ENCODE measurements at regions of chr2 and their contacts with region 1.

Region 1: GRCh38 chr2:65432227-65433190 is at the start of gene SPRED2:
- DNase-seq: peak; percentile 62 to 89 (median 87)
- H3K4me3 ChIP-seq: peak within 1 kb of the TSS; percentile 62 to 98 (median 87)
- H3K27ac ChIP-seq: peak within 1 kb of the TSS; percentile 10 to 95 (median 89)
- H3K27me3 ChIP-seq: no peaks in the 10 kb centered on the region
- CTCF ChIP-seq: peak in 42 of 56 donors; percentile 5 to 46 (median 26)
- total RNA-seq, gene SPRED2: 28.2 to 82.4 (median 50.7) TPM

Region 2: GRCh38 chr2:65129826-65130663 is 302.5 kb before region 1 on chr2 and contains the start of gene RAB1A:
- intact Hi-C with region 1: loop called in 1 of 2 experiments (anchors 2 kb)
- DNase-seq: peak; percentile 98 to 100 (median 99)
- H3K4me3 ChIP-seq: peak within 1 kb of the TSS; percentile 60 to 98 (median 86)
- H3K27ac ChIP-seq: peak within 1 kb of the TSS; percentile 81 to 98 (median 93)
- H3K27me3 ChIP-seq: no peaks in the 10 kb centered on the region
- CTCF ChIP-seq: peak in 53 of 56 donors; percentile 4 to 79 (median 60)
- total RNA-seq, gene RAB1A: 87.4 to 171 (median 127) TPM

Region 3: DNA sequence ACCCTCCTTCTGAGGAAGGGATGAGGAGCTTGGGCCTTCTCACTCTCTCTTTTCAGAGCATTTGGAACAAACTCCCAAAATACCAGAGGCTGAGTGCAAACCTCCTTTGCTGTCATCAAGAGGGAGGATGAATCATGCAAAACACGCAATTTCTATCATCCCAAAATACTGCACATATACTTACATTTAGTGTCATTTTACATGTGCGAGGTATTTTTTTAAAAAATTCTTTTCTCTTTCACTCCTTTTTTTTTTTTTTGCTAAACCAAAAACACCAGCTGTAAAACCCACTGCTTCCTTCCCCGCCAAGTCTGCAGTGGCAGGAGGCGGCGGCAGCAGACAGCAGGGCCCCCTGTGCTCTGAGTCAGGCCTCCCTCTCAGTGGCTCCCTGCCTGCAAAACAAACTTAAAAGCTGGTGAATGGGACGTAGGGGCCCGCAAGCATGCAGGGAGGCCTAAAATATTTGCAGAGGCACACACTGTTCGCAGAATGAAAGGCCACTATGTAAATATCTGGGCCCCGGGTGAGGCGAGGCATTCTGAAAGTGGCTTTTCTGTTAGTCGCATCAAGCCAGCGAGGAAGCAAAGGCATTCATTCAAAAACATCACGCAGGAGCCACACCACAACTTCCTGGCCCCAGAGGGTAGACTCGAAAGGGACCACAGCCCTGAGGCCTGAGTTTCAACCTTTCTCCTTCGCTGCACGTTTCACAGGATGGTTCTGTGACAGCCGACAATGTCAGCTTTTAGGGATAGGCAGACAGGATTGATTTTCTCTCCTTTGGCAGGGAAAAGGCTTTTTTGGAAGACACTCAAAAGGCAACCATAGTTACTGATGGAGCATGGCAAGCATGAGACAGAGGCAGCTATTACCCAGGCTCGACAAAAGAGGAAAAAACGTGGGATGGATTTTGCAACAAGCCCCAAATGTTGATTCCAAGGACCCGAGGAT is 131.5 kb before region 1 on chr2:
- intact Hi-C with region 1: loop called (anchors 1 to 2 kb)
- DNase-seq: peak; percentile 25 to 85 (median 71)
- H3K4me3 ChIP-seq: peak overlapping the region in 50 of 59 donors; percentile 2 to 55 (median 28)
- H3K27ac ChIP-seq: peak overlapping the region in 58 of 59 donors; percentile 51 to 94 (median 80)
- H3K27me3 ChIP-seq: no peaks in the 10 kb centered on the region
- CTCF ChIP-seq: peak in 3 of 56 donors; percentile 5 to 12 (median 6)

Region 4: DNA sequence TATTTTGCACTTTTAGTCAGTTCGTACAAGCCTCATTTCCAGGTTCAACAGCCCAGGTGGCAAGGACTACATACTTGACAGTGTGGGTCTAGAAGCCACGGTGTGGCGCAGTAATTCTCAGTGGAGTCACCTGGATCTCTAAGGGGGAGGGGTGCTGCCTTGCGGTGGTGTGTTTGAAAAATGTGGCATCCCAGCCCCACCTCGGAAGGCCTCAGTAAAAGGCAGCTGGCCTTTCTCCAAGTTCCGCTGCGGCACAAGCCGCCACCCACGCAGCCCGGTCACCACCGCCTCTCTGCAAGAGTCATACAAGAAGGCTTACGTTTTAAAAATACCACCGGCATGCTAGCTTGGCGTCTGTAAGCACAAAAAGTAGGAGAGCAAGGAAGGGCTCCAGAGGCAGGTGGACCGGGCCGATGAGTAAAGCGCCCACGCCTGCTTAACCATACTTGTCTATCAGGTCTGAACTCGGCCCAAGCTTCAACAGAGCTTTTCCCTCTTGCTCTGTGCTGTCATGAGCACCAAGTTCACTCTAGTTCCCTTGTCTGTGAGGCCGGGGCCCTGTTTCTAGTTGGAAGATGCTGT is 49.6 kb before region 1 on chr2:
- intact Hi-C with region 1: loop called in 1 of 2 experiments (anchors 5 kb)
- DNase-seq: peak in 9 of 10 donors; percentile 39 to 81 (median 70)
- H3K4me3 ChIP-seq: peak overlapping the region in 37 of 59 donors; percentile 2 to 39 (median 16)
- H3K27ac ChIP-seq: peak overlapping the region in 51 of 59 donors; percentile 3 to 81 (median 63)
- H3K27me3 ChIP-seq: no peaks in the 10 kb centered on the region
- CTCF ChIP-seq: peak in 7 of 56 donors; percentile 2 to 30 (median 16)

Region 5: DNA sequence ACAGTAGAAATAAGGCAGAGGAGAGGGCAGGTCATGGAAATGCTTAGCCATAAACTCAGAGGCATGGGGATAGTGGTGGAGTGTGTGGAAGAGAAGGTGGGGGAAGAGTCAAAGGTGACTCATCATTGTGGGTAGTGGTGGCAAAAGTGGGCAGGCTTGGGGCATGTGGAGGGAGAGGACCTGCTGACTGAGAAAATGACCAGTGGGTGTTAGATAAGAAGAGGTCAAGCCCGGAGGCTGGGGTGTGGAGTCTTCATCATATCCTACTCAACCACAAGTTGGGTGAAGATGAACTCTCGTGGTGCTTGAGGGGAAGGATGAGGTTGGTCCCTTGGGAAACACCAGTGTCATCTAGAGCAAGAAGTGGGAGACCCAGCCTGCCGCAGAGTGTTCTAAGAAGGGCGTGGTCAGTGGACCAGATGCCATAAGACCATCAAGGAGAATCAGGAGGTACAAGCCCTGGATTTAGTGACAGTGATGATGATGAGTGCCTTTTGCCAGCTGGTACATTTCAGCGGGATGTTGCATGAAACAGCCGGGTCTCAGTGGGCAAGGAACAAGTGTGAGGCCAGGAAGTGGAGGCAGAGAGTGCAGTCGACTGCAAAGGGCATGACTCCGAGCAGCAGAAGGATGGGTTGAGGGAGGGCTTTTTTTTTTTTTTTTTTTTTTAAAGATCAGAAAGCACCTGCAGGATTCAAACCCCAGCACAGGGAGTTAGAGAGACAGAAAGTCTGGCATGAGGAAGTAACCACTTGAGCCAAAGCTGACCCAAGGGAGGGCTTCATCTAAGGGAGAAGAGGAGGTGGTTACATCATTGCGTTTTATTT is 122.5 kb after region 1 on chr2:
- intact Hi-C with region 1: loop called in 1 of 2 experiments (anchors 5 kb)
- DNase-seq: no peak
- H3K4me3 ChIP-seq: no peak overlapping the region
- H3K27ac ChIP-seq: no peak overlapping the region
- H3K27me3 ChIP-seq: no peaks in the 10 kb centered on the region
- CTCF ChIP-seq: no peak

Region 6: DNA sequence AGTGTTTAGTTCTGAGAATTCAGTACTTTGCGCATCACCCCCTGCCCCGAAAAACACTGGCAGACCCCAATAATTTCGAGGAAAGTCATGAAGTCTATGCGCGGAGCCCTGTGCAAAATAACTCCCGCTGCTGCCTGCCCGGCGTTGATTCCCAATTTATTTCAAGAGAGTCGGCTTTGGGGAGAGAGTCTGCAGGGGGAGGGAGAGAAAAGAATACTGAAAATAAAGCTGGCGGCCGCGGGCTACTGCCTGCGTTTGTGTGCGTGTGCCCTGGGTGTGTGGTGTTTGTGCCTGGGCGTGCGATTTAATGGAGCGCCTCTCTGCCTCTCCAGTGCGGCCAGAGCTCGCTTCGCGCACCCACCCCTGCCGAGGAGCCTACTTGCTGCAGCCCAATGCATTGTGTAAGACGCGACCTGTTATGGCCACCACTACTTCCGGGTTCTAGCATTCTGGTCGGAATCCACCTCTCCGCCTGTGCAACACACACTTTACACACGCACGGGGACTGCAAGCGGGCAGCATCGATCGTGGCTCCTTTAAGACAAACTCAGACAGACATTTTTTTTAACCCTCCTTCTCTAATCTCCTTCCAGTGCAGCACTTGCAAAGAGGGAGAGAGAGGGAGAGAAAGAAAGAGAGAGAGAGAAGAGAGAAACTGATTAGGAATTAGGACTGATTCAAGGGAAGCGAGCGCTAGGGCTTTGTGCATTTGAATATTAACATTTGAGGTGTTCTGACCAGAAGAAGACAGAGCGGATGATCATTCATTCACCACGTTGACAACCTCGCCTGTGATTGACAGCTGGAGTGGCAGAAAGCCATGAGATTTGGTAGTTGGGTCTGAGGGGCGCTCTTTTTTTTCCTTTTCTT is 1002.4 kb after region 1 on chr2 and contains the start of gene MEIS1:
- intact Hi-C with region 1: loop called in 1 of 2 experiments (anchors 10 kb)
- DNase-seq: peak; percentile 80 to 95 (median 92)
- H3K4me3 ChIP-seq: peak within 1 kb of the TSS; percentile 53 to 93 (median 77)
- H3K27ac ChIP-seq: peak within 1 kb of the TSS; percentile 51 to 97 (median 91)
- H3K27me3 ChIP-seq: peaks cover 0 to 37% (median 1%) of the 10 kb centered on the region in 45 donors
- CTCF ChIP-seq: peak in 15 of 56 donors; percentile 3 to 20 (median 11)
- total RNA-seq, gene MEIS1: 6.7 to 51.0 (median 18.0) TPM